ENCODE measurements at regions of chr13 and their contacts with region 1.

Region 1: DNA sequence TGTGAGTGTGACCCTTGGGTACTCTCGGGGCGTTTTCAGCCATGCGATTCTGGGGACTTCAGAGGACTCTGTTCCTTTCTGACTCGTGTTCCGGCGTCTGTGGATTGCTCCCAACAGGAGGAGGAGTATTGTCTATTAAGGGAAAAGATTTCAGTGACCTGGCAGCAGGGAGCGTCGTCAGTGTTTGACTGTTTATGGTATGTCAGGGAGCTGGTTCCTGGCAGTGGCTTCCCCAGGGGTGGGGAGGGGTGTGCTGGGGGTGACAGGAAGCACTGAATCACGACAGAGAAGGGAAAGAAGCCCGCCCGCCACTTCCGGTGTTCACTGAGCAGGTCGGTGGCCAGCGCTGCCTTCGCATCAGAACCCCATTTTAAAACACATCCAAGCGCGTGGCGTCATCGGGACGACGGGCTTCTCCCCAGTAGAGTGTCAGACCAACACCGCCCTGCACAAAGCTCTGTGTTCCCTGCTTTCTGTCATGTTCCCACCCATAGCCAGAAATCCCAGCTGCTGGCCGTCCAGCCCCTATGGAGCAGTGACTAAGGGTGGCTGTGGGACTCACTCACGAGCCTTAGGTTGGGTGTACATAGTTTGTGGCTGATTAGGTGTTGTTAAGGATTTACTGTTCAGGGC is 33.8 kb downstream of the COL4A2 start:
- DNase-seq: peak; percentile 83
- H3K4me3 Mint-ChIP-seq: no peak overlapping the region
- H3K27ac Mint-ChIP-seq: peak overlapping the region; percentile 13
- H3K4me1 Mint-ChIP-seq: peaks cover 24% of the 10 kb centered on the region
- H3K27me3 Mint-ChIP-seq: peaks cover 21% of the 10 kb centered on the region

Region 2: GRCh38 chr13:110387391-110388107 is 46.6 kb after region 1 on chr13:
- CTCF ChIA-PET with region 1: no interaction called
- POLR2A ChIA-PET with region 1: no interaction called
- intact Hi-C with region 1: loop called (anchors 5 kb)
- DNase-seq: peak; percentile 44
- H3K4me3 Mint-ChIP-seq: no peak overlapping the region
- H3K27ac Mint-ChIP-seq: no peak overlapping the region
- H3K4me1 Mint-ChIP-seq: peaks cover 10% of the 10 kb centered on the region
- H3K27me3 Mint-ChIP-seq: peaks cover 36% of the 10 kb centered on the region